B cell (primary cell): ENCODE measurements at regions of chr2 and their contacts with region 1.

Region 1: DNA sequence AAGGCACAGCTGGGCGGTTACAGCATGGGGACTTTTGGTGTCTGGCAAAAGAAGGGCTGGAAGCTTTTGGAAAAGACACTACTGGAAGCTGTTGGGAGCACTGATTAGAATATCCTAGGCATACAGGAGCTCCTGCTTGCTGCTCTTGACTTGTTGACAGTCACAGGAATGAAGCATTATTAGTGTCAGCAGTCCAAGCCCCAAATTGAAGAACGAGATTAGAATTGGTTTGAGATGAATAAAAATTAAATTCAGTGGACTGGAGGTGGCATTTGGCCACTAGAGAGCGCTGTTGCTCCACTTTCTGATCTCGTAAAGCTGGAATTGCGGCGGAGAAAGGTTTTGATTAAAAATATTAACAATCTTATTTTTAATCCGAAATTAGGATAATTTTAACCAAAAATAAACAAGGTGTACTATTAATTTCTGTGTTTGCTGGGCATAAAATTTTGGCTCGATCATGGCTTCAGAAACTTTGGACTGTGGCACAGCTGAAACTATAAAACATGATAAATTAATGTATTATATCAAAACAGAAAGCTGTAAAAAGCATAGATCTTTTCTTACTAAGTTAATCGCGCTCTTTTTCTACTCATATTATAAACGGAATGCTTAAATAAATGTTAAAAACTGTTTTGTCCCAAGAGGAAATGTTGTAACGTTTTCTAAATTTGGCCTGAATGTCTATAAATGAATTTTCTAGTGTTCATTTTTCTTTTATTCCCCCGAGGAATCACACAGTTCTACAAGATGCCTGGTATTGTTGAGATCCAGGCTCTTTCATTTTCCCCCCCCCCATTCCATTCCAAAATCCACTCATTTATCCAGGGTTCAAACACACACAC is 2.4 kb upstream of the HOXD8 start:
- DNase-seq: peak; percentile 75
- ATAC-seq: no peak
- H3K4me3 ChIP-seq: no peak overlapping the region
- H3K4me3 Mint-ChIP-seq: no peak overlapping the region
- H3K27ac ChIP-seq: no peak overlapping the region
- H3K27ac Mint-ChIP-seq: no peak overlapping the region
- H3K4me1 ChIP-seq: peaks cover 24 to 50% of the 10 kb centered on the region in 2 donors
- H3K4me1 Mint-ChIP-seq: peaks cover 26% of the 10 kb centered on the region
- H3K27me3 ChIP-seq: peaks cover 0 to 84% (median 65%) of the 10 kb centered on the region in 4 experiments
- H3K27me3 Mint-ChIP-seq: peaks cover 71% of the 10 kb centered on the region
- CTCF ChIP-seq: peak; percentile 98

Region 2: GRCh38 chr2:176079831-176080539 is 47.2 kb before region 1 on chr2:
- CTCF ChIA-PET with region 1: interaction called, 9 read pairs
- POLR2A ChIA-PET with region 1: no interaction called
- intact Hi-C with region 1: loop called (anchors 5 kb)
- DNase-seq: no peak
- ATAC-seq: no peak
- H3K4me3 ChIP-seq: no peak overlapping the region
- H3K4me3 Mint-ChIP-seq: no peak overlapping the region
- H3K27ac ChIP-seq: no peak overlapping the region
- H3K27ac Mint-ChIP-seq: no peak overlapping the region
- H3K4me1 ChIP-seq: peaks cover 3 to 18% of the 10 kb centered on the region in 2 donors
- H3K4me1 Mint-ChIP-seq: peaks cover 5% of the 10 kb centered on the region
- H3K27me3 ChIP-seq: peaks cover 0 to 86% (median 72%) of the 10 kb centered on the region in 4 experiments
- H3K27me3 Mint-ChIP-seq: peaks cover 70% of the 10 kb centered on the region
- CTCF ChIP-seq: peak; percentile 30

Region 3: GRCh38 chr2:176140513-176141317 is 13.6 kb after region 1 on chr2:
- CTCF ChIA-PET with region 1: interaction called, 15 read pairs
- POLR2A ChIA-PET with region 1: no interaction called
- intact Hi-C with region 1: no loop called
- DNase-seq: peak; percentile 74
- ATAC-seq: peak; percentile 73
- H3K4me3 ChIP-seq: peak overlapping the region in 2 of 5 experiments; percentile 29 to 32
- H3K4me3 Mint-ChIP-seq: peak overlapping the region; percentile 42
- H3K27ac ChIP-seq: no peak overlapping the region
- H3K27ac Mint-ChIP-seq: no peak overlapping the region
- H3K4me1 ChIP-seq: peaks cover 19 to 38% of the 10 kb centered on the region in 2 donors
- H3K4me1 Mint-ChIP-seq: peaks cover 23% of the 10 kb centered on the region
- H3K27me3 ChIP-seq: peaks cover 0 to 90% (median 68%) of the 10 kb centered on the region in 4 experiments
- H3K27me3 Mint-ChIP-seq: peaks cover 76% of the 10 kb centered on the region
- CTCF ChIP-seq: peak; percentile 61

Region 4: GRCh38 chr2:176151442-176152369 is 24.6 kb after region 1 on chr2 and contains the start of gene HOXD4:
- CTCF ChIA-PET with region 1: no interaction called
- POLR2A ChIA-PET with region 1: no interaction called
- intact Hi-C with region 1: no loop called
- DNase-seq: no peak
- ATAC-seq: no peak
- H3K4me3 ChIP-seq: no peak within 1 kb of the TSS
- H3K4me3 Mint-ChIP-seq: no peak within 1 kb of the TSS
- H3K27ac ChIP-seq: no peak within 1 kb of the TSS
- H3K27ac Mint-ChIP-seq: no peak within 1 kb of the TSS
- H3K4me1 ChIP-seq: peaks cover 0 to 7% of the 10 kb centered on the region in 2 donors
- H3K4me1 Mint-ChIP-seq: no peaks in the 10 kb centered on the region
- H3K27me3 ChIP-seq: peaks cover 0 to 86% (median 55%) of the 10 kb centered on the region in 4 experiments
- H3K27me3 Mint-ChIP-seq: peaks cover 85% of the 10 kb centered on the region
- CTCF ChIP-seq: no peak
- total RNA-seq, gene HOXD4: not detected in 2 replicates

Region 5: DNA sequence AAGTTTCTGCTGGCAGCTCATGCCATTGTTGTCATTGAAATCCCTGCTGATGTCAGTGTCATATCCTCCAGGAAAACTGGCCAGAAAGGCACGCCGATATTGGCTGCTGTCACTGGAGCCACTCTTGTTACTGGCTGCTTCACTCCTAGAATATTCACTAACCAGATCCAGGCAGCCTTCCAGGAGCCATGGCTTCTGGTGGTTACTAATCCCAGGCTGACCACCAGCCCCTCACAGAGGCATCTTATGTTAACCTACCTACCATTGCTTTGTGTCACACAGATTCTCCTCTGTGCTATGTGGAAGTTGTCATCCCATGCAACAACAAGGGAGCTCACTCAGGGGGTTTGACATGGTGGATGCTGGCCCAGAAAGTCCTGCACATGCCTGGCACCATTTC is 115.1 kb after region 1 on chr2:
- CTCF ChIA-PET with region 1: no interaction called
- POLR2A ChIA-PET with region 1: no interaction called
- intact Hi-C with region 1: no loop called
- DNase-seq: no peak
- ATAC-seq: no peak
- H3K4me3 ChIP-seq: no peak overlapping the region
- H3K4me3 Mint-ChIP-seq: no peak overlapping the region
- H3K27ac ChIP-seq: no peak overlapping the region
- H3K27ac Mint-ChIP-seq: no peak overlapping the region
- H3K4me1 ChIP-seq: no peaks in the 10 kb centered on the region
- H3K4me1 Mint-ChIP-seq: no peaks in the 10 kb centered on the region
- H3K27me3 ChIP-seq: peaks cover 0 to 14% (median 7%) of the 10 kb centered on the region in 4 experiments
- H3K27me3 Mint-ChIP-seq: peaks cover 31% of the 10 kb centered on the region
- CTCF ChIP-seq: no peak

Region 6: DNA sequence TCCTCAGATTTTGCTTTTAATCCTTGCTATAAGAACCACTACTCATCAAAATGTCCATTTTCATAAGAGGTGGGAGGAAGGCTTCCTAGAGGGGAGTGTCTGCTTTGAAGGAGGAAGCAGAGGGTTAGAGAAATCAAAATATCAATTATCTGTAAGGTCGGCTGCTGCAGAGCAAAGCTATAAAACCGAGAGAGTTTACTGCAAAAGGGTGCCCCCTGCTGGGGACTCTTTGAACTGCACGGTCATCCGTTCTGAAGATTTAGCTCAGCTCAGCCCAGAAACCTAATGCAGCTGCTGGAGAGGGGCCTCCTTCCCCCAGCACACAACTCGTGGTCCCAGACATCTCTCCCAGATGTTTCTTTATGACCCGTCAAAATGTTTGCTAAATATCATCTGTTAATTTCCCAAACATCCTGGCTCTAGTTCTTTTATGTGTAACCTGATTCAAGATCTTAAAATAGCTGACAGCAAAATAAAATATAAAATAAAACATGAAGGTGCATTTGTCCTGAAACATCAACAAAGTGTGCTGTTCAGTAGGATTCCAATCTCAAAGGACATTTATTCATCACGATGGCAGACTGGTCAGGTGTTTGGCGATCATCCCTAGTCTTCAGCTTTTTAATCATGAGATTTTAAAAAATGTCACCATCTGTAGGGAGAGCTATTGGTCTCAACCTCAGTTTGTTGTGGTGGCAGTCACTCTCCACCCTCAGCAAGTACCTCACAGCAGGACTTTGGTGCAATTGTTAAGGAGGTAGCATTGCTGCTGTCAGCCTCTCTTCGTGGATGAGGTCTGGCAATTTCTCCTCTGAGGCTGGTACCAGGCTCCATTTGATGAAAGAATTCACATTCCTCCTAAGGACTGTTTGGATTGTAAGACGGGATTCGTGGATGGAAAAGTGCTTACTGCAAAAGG is 328.0 kb after region 1 on chr2:
- CTCF ChIA-PET with region 1: interaction called, 110 read pairs
- POLR2A ChIA-PET with region 1: no interaction called
- intact Hi-C with region 1: no loop called
- DNase-seq: peak; percentile 72
- ATAC-seq: peak; percentile 54
- H3K4me3 ChIP-seq: no peak overlapping the region
- H3K4me3 Mint-ChIP-seq: no peak overlapping the region
- H3K27ac ChIP-seq: no peak overlapping the region
- H3K27ac Mint-ChIP-seq: no peak overlapping the region
- H3K4me1 ChIP-seq: no peaks in the 10 kb centered on the region
- H3K4me1 Mint-ChIP-seq: peaks cover 3% of the 10 kb centered on the region
- H3K27me3 ChIP-seq: peaks cover 0 to 6% (median 2%) of the 10 kb centered on the region in 4 experiments
- H3K27me3 Mint-ChIP-seq: peaks cover 33% of the 10 kb centered on the region
- CTCF ChIP-seq: peak; percentile 96

Region 7: DNA sequence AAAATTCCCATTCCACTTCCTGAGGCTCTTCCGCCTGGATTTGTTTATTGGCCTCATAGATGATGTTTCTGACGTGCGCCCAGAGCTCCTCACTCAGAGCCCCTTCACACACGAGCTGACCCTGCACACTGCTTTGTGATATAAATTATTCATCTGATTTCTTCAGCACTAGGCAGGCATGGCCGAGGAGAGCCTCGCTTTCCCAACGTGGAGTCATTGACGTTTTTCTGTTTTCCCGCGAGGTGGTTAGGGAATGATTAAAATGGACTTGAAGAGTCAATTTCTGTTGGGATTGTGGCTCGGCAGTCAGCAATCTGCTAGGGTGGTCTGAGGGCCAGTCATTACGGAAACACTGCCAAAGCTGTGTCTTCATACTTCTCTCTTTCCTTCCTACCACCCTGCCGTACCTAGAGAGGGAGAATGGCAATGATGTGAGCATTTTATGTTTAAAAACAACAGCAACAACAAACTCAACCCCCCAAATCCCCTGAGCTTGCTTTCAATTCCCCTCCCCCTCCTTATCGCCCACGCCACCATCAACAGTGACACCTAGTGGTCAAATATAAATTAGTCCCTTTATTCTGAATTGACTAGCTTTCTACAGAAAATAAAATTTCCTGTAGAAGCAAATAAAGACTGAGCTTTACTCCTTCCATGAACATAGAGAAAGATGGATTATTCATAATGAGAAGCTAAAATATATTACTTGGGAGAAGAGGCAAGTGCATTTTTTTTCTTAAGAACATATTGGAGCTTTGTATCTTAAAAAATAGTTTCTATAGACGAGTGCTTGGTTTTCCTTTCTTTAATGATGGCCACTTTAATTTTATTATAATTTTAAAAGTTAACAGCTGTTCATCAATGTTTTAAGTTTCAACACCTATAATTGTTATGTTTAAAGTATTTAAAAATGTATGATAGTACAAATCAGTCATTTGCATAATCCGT is 427.2 kb after region 1 on chr2:
- CTCF ChIA-PET with region 1: interaction called, 38 read pairs
- POLR2A ChIA-PET with region 1: no interaction called
- intact Hi-C with region 1: loop called (anchors 1 kb)
- DNase-seq: peak; percentile 72
- ATAC-seq: peak; percentile 57
- H3K4me3 ChIP-seq: peak overlapping the region; percentile 25 to 60 (median 52)
- H3K4me3 Mint-ChIP-seq: peak overlapping the region; percentile 74
- H3K27ac ChIP-seq: no peak overlapping the region
- H3K27ac Mint-ChIP-seq: no peak overlapping the region
- H3K4me1 ChIP-seq: peaks cover 10 to 11% of the 10 kb centered on the region in 2 donors
- H3K4me1 Mint-ChIP-seq: peaks cover 10% of the 10 kb centered on the region
- H3K27me3 ChIP-seq: peaks cover 0 to 22% (median 14%) of the 10 kb centered on the region in 4 experiments
- H3K27me3 Mint-ChIP-seq: peaks cover 49% of the 10 kb centered on the region
- CTCF ChIP-seq: peak; percentile 76

Region 8: GRCh38 chr2:176638167-176639015 is 511.2 kb after region 1 on chr2:
- CTCF ChIA-PET with region 1: interaction called, 17 read pairs
- POLR2A ChIA-PET with region 1: no interaction called
- intact Hi-C with region 1: loop called (anchors 1 kb)
- DNase-seq: peak; percentile 65
- ATAC-seq: peak; percentile 51
- H3K4me3 ChIP-seq: peak overlapping the region in 4 of 5 experiments; percentile 31 to 62 (median 50)
- H3K4me3 Mint-ChIP-seq: peak overlapping the region; percentile 73
- H3K27ac ChIP-seq: no peak overlapping the region
- H3K27ac Mint-ChIP-seq: no peak overlapping the region
- H3K4me1 ChIP-seq: peaks cover 11 to 12% of the 10 kb centered on the region in 2 donors
- H3K4me1 Mint-ChIP-seq: peaks cover 8% of the 10 kb centered on the region
- H3K27me3 ChIP-seq: peaks cover 0 to 50% (median 39%) of the 10 kb centered on the region in 4 experiments
- H3K27me3 Mint-ChIP-seq: peaks cover 66% of the 10 kb centered on the region
- CTCF ChIP-seq: peak; percentile 72

Region 9: DNA sequence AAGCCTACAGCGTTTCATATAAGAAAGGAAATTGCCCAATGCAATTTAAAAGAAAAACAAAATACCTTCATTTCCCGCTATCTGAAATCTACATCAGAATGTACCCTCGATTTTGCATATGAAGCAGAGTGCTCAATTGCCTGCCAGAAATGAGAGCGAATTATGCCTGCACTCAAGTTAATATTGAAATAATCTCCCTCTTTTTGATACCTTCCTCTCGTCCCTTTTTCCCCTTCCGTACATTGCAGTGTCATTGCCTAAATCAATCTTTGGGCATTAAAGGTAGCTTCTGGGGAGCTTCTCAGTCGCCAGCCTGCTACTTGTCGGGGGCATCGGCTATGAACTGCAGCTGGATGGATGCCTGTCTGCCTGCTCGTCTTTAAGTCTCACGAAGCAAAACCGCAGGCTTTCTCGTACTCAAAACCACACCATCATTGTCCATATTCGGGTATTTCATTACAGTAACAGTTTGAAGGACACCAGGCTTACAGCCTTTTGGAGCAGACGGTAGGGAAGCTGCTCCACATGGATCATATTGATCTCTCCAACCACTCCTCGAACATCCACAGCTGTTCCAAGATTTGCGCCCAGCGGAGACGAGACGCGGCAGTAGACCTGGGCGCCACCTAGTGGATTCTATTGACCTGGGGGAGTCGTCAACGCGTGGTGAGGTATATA is 1021.5 kb after region 1 on chr2:
- CTCF ChIA-PET with region 1: interaction called, 25 read pairs
- POLR2A ChIA-PET with region 1: no interaction called
- intact Hi-C with region 1: loop called (anchors 1 kb)
- DNase-seq: peak; percentile 85
- ATAC-seq: peak; percentile 92
- H3K4me3 ChIP-seq: peak overlapping the region; percentile 42 to 94 (median 67)
- H3K4me3 Mint-ChIP-seq: peak overlapping the region; percentile 92
- H3K27ac ChIP-seq: no peak overlapping the region
- H3K27ac Mint-ChIP-seq: peak overlapping the region; percentile 2
- H3K4me1 ChIP-seq: peaks cover 9 to 13% of the 10 kb centered on the region in 2 donors
- H3K4me1 Mint-ChIP-seq: peaks cover 11% of the 10 kb centered on the region
- H3K27me3 ChIP-seq: peaks cover 0 to 13% (median 10%) of the 10 kb centered on the region in 4 experiments
- H3K27me3 Mint-ChIP-seq: peaks cover 36% of the 10 kb centered on the region
- CTCF ChIP-seq: peak; percentile 99